ENCODE measurements at regions of chr11 and their contacts with region 1.

Region 1: DNA sequence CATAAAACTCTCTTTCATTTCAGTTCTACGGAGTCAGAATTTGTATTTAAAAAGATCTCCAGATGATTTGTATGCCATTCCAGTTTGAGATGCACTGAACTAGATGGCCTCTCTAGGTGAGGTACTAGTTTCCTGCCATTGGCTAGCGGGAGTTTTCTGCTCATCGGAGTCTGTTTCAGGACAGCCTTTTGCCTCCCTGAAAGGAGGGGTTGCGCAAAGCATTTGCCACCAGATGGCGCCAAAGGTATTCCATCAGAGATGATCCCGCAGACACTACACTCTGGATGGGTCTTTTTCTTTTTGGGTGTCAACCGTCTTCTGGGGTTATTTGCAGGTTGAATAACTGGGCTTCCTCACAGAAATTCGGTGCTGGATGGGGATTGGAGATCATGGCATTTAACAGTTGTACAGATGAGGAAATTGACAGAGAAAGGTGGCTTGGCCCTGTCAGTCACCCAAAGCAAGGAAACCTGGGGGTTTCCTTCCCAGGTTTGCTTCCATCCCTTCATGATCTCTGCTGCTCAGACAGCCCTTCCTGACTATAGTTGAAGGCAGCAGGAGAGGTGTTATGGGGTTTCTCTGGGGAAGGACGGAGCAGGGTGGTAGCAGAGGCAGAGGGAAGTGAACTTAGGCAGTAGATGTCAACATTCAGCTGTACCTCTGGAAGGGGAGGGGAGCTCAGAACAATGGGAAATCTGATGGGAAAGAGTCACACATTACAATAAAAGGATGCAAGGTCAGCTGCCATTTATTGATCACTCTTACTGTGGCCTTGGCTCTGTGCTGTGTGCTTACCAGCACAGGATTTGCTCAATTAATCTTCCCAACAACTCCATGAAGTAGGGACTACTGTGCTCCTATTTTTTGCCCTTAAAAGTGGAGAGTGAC is 81.6 kb downstream of the CCDC81 start:
- DNase-seq: peak; percentile 66 to 97 (median 86)

Region 2: DNA sequence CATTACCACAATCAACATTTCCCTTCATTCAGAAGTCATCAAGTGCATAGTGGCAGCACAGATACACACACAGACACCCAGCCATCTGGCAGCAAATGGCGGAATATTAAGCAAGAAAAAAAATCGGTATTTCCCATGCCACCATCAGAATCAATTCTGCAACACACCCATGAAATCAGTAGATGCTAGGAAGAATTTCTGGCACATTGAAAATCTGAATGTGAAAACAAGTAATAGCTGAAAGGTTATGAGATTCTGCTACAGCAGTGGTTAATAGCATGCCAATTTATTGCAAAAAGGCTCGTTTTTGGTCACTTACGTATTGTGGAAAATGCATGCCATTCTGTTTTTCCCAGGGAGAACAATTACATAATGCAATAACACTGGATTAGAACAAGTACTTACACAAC is 478.5 kb before region 1 on chr11:
- intact Hi-C with region 1: no loop called
- DNase-seq: no peak

Region 3: DNA sequence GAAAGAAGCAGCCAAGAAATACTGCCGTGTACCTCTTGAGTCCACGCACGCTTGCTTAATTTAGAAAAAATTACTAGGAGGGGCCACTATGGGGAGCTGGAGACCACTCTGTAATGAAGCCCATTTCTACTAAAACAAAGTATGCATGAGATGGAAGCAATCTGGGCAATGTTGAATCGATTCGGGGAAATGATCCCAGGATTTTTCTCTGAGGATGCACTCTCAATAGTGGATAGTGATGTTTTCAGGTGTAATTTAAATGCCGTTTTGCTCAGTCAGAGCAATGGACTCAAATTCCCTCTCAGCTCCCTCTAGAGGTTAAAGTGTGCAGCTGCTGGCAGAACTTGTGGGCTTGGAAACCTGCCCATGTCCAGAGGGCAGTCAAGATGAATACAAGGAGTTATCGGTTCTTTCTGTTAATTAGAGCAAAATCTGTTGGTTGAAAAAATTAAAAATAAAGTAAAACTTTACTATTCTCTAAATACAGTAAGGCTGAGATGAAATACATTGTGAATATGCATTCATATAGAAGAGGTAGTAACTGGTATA is 152.0 kb after region 1 on chr11:
- intact Hi-C with region 1: loop called (anchors 2 kb)
- DNase-seq: peak in 8 of 10 donors; percentile 30 to 86 (median 50)

Region 4: GRCh38 chr11:86802601-86803051 is 346.3 kb after region 1 on chr11:
- intact Hi-C with region 1: loop called (anchors 5 kb)
- DNase-seq: no peak

Region 5: GRCh38 chr11:86818466-86819192 is 362.3 kb after region 1 on chr11:
- intact Hi-C with region 1: loop called (anchors 1 kb)
- DNase-seq: no peak

Region 6: GRCh38 chr11:86919557-86920210 is 463.4 kb after region 1 on chr11:
- intact Hi-C with region 1: loop called (anchors 2 kb)
- DNase-seq: no peak

Measured in posterior cingulate gyrus (tissue), 11 donors.